ENCODE measurements at regions of chr18 and their contacts with region 1.

Region 1: GRCh38 chr18:58649966-58650816 is 21.1 kb upstream of the MALT1 start:
- DNase-seq: no peak
- ATAC-seq: peak in 1 of 4 donors; percentile 39
- H3K4me3 ChIP-seq: no peak overlapping the region
- H3K27ac ChIP-seq: no peak overlapping the region
- H3K4me1 ChIP-seq: peaks cover 0 to 26% (median 0%) of the 10 kb centered on the region in 12 donors
- H3K27me3 ChIP-seq: no peaks in the 10 kb centered on the region
- CTCF ChIP-seq: no peak
- POLR2A ChIP-seq: no peak

Region 2: GRCh38 chr18:58661423-58661822 is 11.2 kb after region 1 on chr18:
- intact Hi-C with region 1: loop called in 1 of 10 experiments (anchors 2 kb)
- DNase-seq: no peak
- ATAC-seq: peak in 3 of 4 donors; percentile 59 to 66 (median 66)
- H3K4me3 ChIP-seq: no peak overlapping the region
- H3K27ac ChIP-seq: no peak overlapping the region
- H3K4me1 ChIP-seq: peaks cover 0 to 23% (median 6%) of the 10 kb centered on the region in 12 donors
- H3K27me3 ChIP-seq: no peaks in the 10 kb centered on the region
- CTCF ChIP-seq: peak in 10 of 12 donors; percentile 9 to 49 (median 29)
- POLR2A ChIP-seq: no peak

Measured in heart left ventricle (tissue), 16 donors.